PC-9 (cell line): ENCODE measurements at regions of chr12 and their contacts with region 1.

Region 1: GRCh38 chr12:59173686-59174085 is 253.4 kb upstream of the LRIG3 start:
- DNase-seq: no peak
- H3K4me3 ChIP-seq: no peak overlapping the region
- H3K27ac ChIP-seq: no peak overlapping the region
- H3K4me1 ChIP-seq: no peaks in the 10 kb centered on the region
- H3K27me3 ChIP-seq: no peaks in the 10 kb centered on the region
- CTCF ChIP-seq: no peak

Region 2: GRCh38 chr12:58860056-58860787 is 313.5 kb before region 1 on chr12:
- CTCF ChIA-PET with region 1: no interaction called
- POLR2A ChIA-PET with region 1: interaction called, 11 read pairs
- intact Hi-C with region 1: no loop called
- DNase-seq: no peak
- H3K4me3 ChIP-seq: no peak overlapping the region
- H3K27ac ChIP-seq: no peak overlapping the region
- H3K4me1 ChIP-seq: peaks cover 23% of the 10 kb centered on the region
- H3K27me3 ChIP-seq: no peaks in the 10 kb centered on the region
- CTCF ChIP-seq: no peak

Region 3: GRCh38 chr12:59636945-59637691 is 463.4 kb after region 1 on chr12:
- CTCF ChIA-PET with region 1: no interaction called
- POLR2A ChIA-PET with region 1: no interaction called
- intact Hi-C with region 1: no loop called
- DNase-seq: no peak
- H3K4me3 ChIP-seq: no peak overlapping the region
- H3K27ac ChIP-seq: no peak overlapping the region
- H3K4me1 ChIP-seq: no peaks in the 10 kb centered on the region
- H3K27me3 ChIP-seq: no peaks in the 10 kb centered on the region
- CTCF ChIP-seq: no peak